IMR-90 (cell line): ENCODE measurements at regions of chr19 and their contacts with region 1.

Region 1: GRCh38 chr19:18203863-18204393 is at the start of gene RAB3A:
- DNase-seq: peak; percentile 100
- ATAC-seq: peak; percentile 87
- H3K4me3 ChIP-seq: peak within 1 kb of the TSS; percentile 75
- H3K27ac ChIP-seq: peak within 1 kb of the TSS; percentile 93
- H3K4me1 ChIP-seq: peaks cover 16% of the 10 kb centered on the region
- H3K27me3 ChIP-seq: no peaks in the 10 kb centered on the region
- CTCF ChIP-seq: no peak
- POLR2A ChIP-seq: peak; percentile 70
- RAD21 ChIP-seq: no peak
- total RNA-seq, gene RAB3A: 2.8 and 3.0 TPM in 2 replicates

Region 2: GRCh38 chr19:18029617-18030338 is 174.2 kb before region 1 on chr19:
- CTCF ChIA-PET with region 1: no interaction called
- POLR2A ChIA-PET with region 1: no interaction called
- dilution Hi-C with region 1: no loop called
- in situ Hi-C with region 1: no loop called
- intact Hi-C with region 1: no loop called
- DNase-seq: peak; percentile 32
- ATAC-seq: peak; percentile 29
- H3K4me3 ChIP-seq: no peak overlapping the region
- H3K27ac ChIP-seq: no peak overlapping the region
- H3K4me1 ChIP-seq: peaks cover 3% of the 10 kb centered on the region
- H3K27me3 ChIP-seq: no peaks in the 10 kb centered on the region
- CTCF ChIP-seq: no peak
- POLR2A ChIP-seq: no peak
- RAD21 ChIP-seq: no peak

Region 3: DNA sequence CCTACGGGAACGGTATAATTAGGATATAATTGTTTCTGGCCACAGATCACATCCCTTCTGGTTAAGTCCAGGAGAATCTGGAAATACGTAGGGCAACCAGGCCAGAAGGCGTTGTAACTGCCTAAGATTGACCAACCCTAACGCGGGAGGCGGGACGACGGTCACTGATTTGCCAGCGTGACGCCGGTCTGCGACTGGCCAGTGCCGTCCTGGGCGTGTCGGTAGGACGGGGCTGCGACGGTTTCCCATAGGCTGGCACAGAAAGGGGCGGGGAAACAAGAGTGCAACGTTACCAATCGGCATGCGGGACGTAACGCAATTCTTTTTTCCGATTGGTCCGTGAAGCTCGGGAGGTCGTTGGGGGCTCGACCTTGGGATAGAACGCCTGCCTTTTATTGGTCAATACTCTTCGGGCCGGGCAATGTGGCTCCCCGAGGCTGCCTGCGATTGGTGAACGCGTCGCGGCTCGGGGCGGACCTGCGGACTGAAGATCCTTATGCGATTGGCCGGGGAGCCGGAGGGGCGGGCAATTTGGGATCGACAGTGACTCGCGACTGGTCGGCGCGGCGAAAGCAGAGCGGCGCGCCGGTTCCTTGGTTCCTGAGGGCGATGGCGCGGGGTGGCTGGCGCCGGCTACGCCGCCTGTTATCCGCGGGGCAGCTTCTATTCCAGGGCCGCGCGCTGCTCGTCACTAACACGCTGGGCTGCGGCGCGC is 11.1 kb before region 1 on chr19 and contains the start of gene MPV17L2:
- CTCF ChIA-PET with region 1: interaction called, 4 read pairs
- POLR2A ChIA-PET with region 1: interaction called, 4 read pairs
- dilution Hi-C with region 1: no loop called
- in situ Hi-C with region 1: no loop called
- intact Hi-C with region 1: loop called (anchors 1 kb)
- DNase-seq: peak; percentile 100
- ATAC-seq: peak; percentile 93
- H3K4me3 ChIP-seq: peak within 1 kb of the TSS; percentile 63
- H3K27ac ChIP-seq: peak within 1 kb of the TSS; percentile 30
- H3K4me1 ChIP-seq: peaks cover 8% of the 10 kb centered on the region
- H3K27me3 ChIP-seq: no peaks in the 10 kb centered on the region
- CTCF ChIP-seq: no peak
- POLR2A ChIP-seq: peak; percentile 80
- RAD21 ChIP-seq: no peak
- total RNA-seq, gene MPV17L2: 7.2 TPM in 2 replicates

Region 4: DNA sequence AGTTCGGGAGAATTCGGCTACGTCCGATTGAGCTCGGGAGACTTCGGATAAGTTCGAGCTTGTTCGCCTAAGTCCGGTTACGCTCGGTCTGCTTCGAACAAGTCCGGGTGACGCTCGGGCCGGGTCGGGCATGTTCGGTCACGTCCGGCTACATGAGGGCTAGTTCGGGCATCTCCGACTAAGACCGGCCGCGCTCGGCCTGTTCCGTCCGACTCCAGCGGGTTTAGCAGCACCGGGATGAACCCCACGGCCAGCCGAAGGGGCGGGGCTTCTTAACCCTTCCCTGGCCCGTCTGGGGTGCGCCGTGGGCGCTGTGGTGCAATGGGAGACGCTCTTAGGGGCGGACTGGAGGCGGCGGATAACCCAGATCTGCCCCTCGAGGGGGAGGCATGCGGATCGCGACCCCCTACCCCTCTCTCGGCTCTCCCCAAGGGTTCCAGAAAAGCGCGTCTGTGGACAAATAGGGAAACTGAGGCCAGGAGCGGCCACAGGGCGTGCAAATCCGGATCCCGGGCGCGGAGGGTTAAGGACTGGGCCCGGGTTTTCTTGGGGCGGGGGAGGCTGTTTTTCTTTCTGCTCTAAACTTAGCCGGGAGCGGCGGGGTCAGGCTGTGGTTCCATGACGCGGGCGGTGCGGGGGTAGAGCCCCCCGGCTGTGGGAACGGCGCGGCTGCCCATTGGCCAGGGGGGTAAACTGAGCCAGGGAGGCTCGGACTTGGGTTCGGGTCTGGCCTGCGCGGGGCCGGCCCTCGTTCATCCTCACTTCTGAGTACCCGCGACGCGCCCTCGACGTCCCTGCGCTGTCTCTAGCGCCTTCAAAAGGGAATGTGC is 20.8 kb after region 1 on chr19:
- CTCF ChIA-PET with region 1: interaction called, 3 read pairs
- POLR2A ChIA-PET with region 1: no interaction called
- dilution Hi-C with region 1: no loop called
- in situ Hi-C with region 1: no loop called
- intact Hi-C with region 1: loop called (anchors 1 kb)
- DNase-seq: peak; percentile 99
- ATAC-seq: peak; percentile 99
- H3K4me3 ChIP-seq: peak overlapping the region; percentile 52
- H3K27ac ChIP-seq: peak overlapping the region; percentile 8; the same call in 1 of the 2 replicates
- H3K4me1 ChIP-seq: peaks cover 7% of the 10 kb centered on the region
- H3K27me3 ChIP-seq: peaks cover 4% of the 10 kb centered on the region; the same call in 1 of the 2 replicates
- CTCF ChIP-seq: no peak
- POLR2A ChIP-seq: no peak
- RAD21 ChIP-seq: no peak

Region 5: DNA sequence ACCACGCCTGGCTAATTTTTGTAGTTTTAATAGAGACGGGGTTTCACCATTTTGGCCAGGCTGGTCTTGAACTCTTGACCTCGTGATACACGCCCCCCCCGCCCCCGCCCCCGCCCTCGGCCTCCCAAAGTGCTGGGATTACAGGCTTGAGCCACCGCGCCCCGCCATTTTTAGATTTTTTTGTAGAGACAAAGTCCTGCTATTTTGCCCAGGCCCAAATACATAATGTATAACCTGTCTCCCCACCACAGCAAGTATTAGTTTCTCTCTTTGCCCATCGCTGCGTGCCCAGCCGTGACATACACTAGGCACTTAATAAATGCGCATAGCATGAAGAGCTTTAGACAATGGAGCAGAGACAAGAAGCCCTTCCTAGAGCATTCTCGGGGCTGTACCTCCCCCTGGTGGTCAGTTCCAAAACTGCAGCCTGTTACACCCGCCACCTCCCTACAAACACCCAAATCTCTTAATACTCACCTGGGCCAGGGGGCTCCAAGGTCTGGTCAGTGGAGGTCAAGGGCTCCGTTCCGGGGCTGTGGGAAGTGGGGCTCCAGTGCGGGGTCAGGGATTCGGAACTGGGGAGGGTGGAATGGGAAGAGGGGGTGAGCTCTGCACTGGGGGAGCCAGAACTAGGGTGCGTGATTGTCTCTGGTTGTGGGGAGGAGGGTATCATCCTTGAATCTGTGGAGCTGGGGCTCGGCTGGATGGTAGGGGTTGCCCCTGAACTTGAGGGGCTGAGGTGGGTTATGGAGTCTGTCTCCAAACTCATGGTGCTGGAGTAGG is 47.9 kb after region 1 on chr19:
- CTCF ChIA-PET with region 1: no interaction called
- POLR2A ChIA-PET with region 1: interaction called, 8 read pairs
- dilution Hi-C with region 1: no loop called
- in situ Hi-C with region 1: no loop called
- intact Hi-C with region 1: loop called (anchors 1 kb)
- DNase-seq: peak; percentile 63
- ATAC-seq: peak; percentile 94
- H3K4me3 ChIP-seq: no peak overlapping the region
- H3K27ac ChIP-seq: no peak overlapping the region
- H3K4me1 ChIP-seq: no peaks in the 10 kb centered on the region
- H3K27me3 ChIP-seq: peaks cover 22% of the 10 kb centered on the region
- CTCF ChIP-seq: peak; percentile 93
- POLR2A ChIP-seq: 0 out of 2 replicates have a peak, but pooled peaks have one; percentile 48
- RAD21 ChIP-seq: peak; percentile 98

Region 6: GRCh38 chr19:18304458-18305310 is 100.8 kb after region 1 on chr19:
- CTCF ChIA-PET with region 1: no interaction called
- POLR2A ChIA-PET with region 1: no interaction called
- dilution Hi-C with region 1: no loop called
- in situ Hi-C with region 1: no loop called
- intact Hi-C with region 1: no loop called
- DNase-seq: peak; percentile 83
- ATAC-seq: peak; percentile 86
- H3K4me3 ChIP-seq: peak overlapping the region; percentile 40
- H3K27ac ChIP-seq: peak overlapping the region; percentile 97
- H3K4me1 ChIP-seq: peaks cover 22% of the 10 kb centered on the region
- H3K27me3 ChIP-seq: no peaks in the 10 kb centered on the region
- CTCF ChIP-seq: no peak
- POLR2A ChIP-seq: peak; percentile 88
- RAD21 ChIP-seq: no peak; the same call in none of the 2 replicates

Region 7: DNA sequence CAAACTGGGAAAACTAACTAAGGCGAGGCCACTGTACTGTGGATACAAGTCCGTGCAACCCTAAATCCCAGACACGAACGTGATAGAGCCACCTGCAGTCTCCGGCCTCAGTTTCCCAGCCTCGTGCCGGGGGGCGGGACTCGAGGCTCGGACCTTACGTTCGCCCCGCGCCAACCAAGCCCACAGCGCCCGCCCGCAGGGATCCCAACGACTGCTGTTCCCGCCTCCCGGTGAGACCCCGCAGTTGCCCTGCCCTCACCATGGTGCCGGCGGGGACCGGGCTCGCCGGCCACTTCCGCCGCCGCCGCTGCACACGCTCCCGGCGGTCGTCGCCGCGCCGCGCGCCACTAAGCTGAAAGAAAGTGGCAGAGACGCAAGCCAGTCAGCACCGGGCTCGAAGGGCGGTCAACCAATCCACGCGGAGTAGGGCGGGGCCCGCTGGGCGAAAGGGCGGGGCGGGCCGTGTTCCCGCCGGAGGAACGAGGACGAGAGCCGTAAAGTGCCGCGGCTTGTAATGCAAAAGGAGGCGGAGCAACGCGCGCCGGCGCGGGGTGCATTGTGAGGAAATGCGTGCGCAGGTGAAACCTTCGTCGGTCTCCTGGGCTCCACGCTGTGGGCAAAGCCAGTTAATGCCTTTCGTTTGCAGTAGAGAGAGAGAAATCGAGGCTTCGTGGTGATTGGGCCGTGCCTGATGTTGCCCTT is 119.0 kb after region 1 on chr19 and contains the start of gene LSM4:
- CTCF ChIA-PET with region 1: interaction called, 5 read pairs
- POLR2A ChIA-PET with region 1: no interaction called
- dilution Hi-C with region 1: no loop called
- in situ Hi-C with region 1: loop called (anchors 10 kb)
- intact Hi-C with region 1: loop called (anchors 5 kb)
- DNase-seq: peak; percentile 95
- ATAC-seq: peak; percentile 98
- H3K4me3 ChIP-seq: peak within 1 kb of the TSS; percentile 77
- H3K27ac ChIP-seq: peak within 1 kb of the TSS; percentile 73
- H3K4me1 ChIP-seq: peaks cover 5% of the 10 kb centered on the region; the same call in 1 of the 2 replicates
- H3K27me3 ChIP-seq: no peaks in the 10 kb centered on the region
- CTCF ChIP-seq: peak; percentile 44
- POLR2A ChIP-seq: peak; percentile 54; the same call in 1 of the 2 replicates
- RAD21 ChIP-seq: peak; percentile 48
- total RNA-seq, gene LSM4: 44.8 and 88.0 TPM in 2 replicates

Region 8: GRCh38 chr19:18401580-18402112 is 197.7 kb after region 1 on chr19:
- CTCF ChIA-PET with region 1: no interaction called
- POLR2A ChIA-PET with region 1: no interaction called
- dilution Hi-C with region 1: no loop called
- in situ Hi-C with region 1: no loop called
- intact Hi-C with region 1: no loop called
- DNase-seq: peak; percentile 69
- ATAC-seq: peak; percentile 59
- H3K4me3 ChIP-seq: no peak overlapping the region
- H3K27ac ChIP-seq: no peak overlapping the region
- H3K4me1 ChIP-seq: peaks cover 21% of the 10 kb centered on the region
- H3K27me3 ChIP-seq: no peaks in the 10 kb centered on the region
- CTCF ChIP-seq: peak; percentile 45
- POLR2A ChIP-seq: no peak
- RAD21 ChIP-seq: no peak; the same call in 1 of the 2 replicates

Region 9: GRCh38 chr19:18419195-18419698 is 215.3 kb after region 1 on chr19 and contains the start of gene SSBP4:
- CTCF ChIA-PET with region 1: no interaction called
- POLR2A ChIA-PET with region 1: no interaction called
- dilution Hi-C with region 1: no loop called
- in situ Hi-C with region 1: loop called (anchors 10 kb)
- intact Hi-C with region 1: loop called (anchors 10 kb)
- DNase-seq: peak; percentile 70
- ATAC-seq: peak; percentile 38
- H3K4me3 ChIP-seq: peak within 1 kb of the TSS; percentile 68
- H3K27ac ChIP-seq: peak within 1 kb of the TSS; percentile 90
- H3K4me1 ChIP-seq: peaks cover 37% of the 10 kb centered on the region
- H3K27me3 ChIP-seq: no peaks in the 10 kb centered on the region
- CTCF ChIP-seq: peak; percentile 50
- POLR2A ChIP-seq: peak; percentile 38
- RAD21 ChIP-seq: peak; percentile 24
- total RNA-seq, gene SSBP4: 13.3 and 14.9 TPM in 2 replicates

Region 10: DNA sequence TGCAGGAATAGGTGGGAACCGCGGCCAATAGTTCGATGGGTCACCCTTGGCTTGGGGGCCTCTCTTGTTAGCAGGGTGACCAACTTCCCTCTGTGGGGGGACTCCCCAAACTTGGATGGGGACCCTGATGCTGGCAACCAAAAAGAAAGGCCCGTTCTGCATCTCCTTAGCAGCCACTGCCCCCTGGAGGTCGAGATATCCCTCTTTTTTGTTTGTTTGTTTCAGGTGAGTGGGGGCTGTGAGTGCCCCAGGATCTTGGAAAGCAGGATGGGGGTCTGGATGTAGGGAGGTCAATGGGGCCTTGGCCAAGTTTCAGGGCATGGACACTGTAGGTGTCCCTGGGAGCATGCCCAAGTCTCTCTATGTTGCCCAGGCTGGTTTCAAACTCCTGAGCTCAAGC is 471.9 kb after region 1 on chr19:
- CTCF ChIA-PET with region 1: no interaction called
- POLR2A ChIA-PET with region 1: no interaction called
- dilution Hi-C with region 1: no loop called
- in situ Hi-C with region 1: no loop called
- intact Hi-C with region 1: no loop called
- DNase-seq: no peak
- ATAC-seq: no peak
- H3K4me3 ChIP-seq: no peak overlapping the region
- H3K27ac ChIP-seq: no peak overlapping the region
- H3K4me1 ChIP-seq: peaks cover 15% of the 10 kb centered on the region
- H3K27me3 ChIP-seq: no peaks in the 10 kb centered on the region
- CTCF ChIP-seq: peak; percentile 52
- POLR2A ChIP-seq: no peak
- RAD21 ChIP-seq: peak; percentile 61